CD8-positive, alpha-beta T cell (primary cell): ENCODE measurements at regions of chr17 and their contacts with region 1.

Region 1: GRCh38 chr17:49707608-49708514 is at the start of gene SLC35B1:
- DNase-seq: peak; percentile 96 to 100 (median 98)
- ATAC-seq: peak; percentile 97
- H3K4me3 ChIP-seq: peak within 1 kb of the TSS; percentile 87 to 93
- H3K4me3 Mint-ChIP-seq: peak within 1 kb of the TSS; percentile 93
- H3K27ac ChIP-seq: peak within 1 kb of the TSS; percentile 95 to 97
- H3K27ac Mint-ChIP-seq: peak within 1 kb of the TSS; percentile 98
- H3K4me1 ChIP-seq: peaks cover 21% of the 10 kb centered on the region
- H3K4me1 Mint-ChIP-seq: peaks cover 42% of the 10 kb centered on the region
- H3K27me3 ChIP-seq: no peaks in the 10 kb centered on the region
- H3K27me3 Mint-ChIP-seq: no peaks in the 10 kb centered on the region
- CTCF ChIP-seq: peak; percentile 80
- total RNA-seq, gene SLC35B1: 57.7 to 64.2 TPM

Region 2: DNA sequence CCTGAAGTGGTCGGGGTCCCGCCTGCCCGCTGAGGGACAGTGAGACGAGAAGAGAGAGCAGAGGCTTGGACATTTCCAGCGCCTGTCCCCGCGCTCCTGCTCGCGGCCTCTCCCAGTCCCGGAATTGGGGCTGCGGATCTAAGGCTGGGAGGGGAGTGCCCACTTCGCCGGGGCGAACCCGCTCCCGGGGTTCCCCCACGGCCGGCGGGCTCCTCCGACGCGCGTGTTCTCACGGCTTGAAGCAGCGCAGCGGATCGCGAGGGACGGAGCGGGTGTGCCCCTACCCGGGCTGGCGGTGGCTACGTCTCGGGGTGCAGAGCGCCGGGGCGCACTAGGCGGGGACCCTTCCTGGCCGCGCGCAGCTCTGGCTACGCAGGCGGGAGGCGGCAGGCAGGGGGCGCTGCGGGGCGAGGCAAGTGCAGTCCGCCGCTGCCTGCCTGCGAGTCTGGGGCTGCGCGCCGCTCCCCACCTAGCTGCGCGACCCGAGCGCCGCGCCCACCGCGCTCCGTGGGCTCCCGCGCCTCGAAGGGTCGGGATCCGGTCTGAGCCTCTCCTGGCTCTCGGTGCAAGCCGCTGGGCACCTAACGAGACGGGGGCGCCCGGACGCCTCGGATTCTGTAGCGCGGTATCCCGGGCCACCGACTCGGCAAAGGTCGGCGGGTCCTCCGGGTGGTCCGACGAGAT is 211.5 kb before region 1 on chr17:
- CTCF ChIA-PET with region 1: no interaction called
- POLR2A ChIA-PET with region 1: no interaction called
- intact Hi-C with region 1: loop called in 1 of 2 experiments (anchors 10 kb)
- DNase-seq: peak; percentile 74 to 91 (median 85)
- ATAC-seq: peak; percentile 83
- H3K4me3 ChIP-seq: peak overlapping the region; percentile 53 to 67
- H3K4me3 Mint-ChIP-seq: peak overlapping the region; percentile 79
- H3K27ac ChIP-seq: no peak overlapping the region
- H3K27ac Mint-ChIP-seq: no peak overlapping the region
- H3K4me1 ChIP-seq: peaks cover 33% of the 10 kb centered on the region
- H3K4me1 Mint-ChIP-seq: peaks cover 28% of the 10 kb centered on the region
- H3K27me3 ChIP-seq: peaks cover 28 to 29% of the 10 kb centered on the region in 2 experiments
- H3K27me3 Mint-ChIP-seq: peaks cover 36% of the 10 kb centered on the region
- CTCF ChIP-seq: peak; percentile 89

Region 3: DNA sequence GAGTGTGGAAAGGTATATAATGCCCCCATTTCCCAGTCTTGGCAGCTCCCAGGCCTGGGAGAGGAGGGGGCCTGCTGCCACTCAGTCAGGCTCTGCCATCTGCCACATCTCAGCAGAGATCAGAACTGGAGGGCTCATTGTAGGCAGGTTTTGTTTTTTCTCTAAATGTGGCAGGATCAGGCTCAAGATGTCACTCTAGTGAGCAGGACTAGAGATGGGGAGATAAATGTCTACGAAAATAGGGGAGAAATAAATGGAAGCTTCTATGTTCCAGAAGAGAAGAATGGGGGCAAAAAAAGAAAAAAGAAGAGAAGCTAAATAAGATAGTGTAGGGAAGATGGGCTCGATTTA is 118.3 kb before region 1 on chr17:
- CTCF ChIA-PET with region 1: no interaction called
- POLR2A ChIA-PET with region 1: no interaction called
- intact Hi-C with region 1: no loop called
- DNase-seq: no peak
- ATAC-seq: no peak
- H3K4me3 ChIP-seq: no peak overlapping the region
- H3K4me3 Mint-ChIP-seq: no peak overlapping the region
- H3K27ac ChIP-seq: no peak overlapping the region
- H3K27ac Mint-ChIP-seq: peak overlapping the region; percentile 13
- H3K4me1 ChIP-seq: no peaks in the 10 kb centered on the region
- H3K4me1 Mint-ChIP-seq: peaks cover 5% of the 10 kb centered on the region
- H3K27me3 ChIP-seq: no peaks in the 10 kb centered on the region
- H3K27me3 Mint-ChIP-seq: no peaks in the 10 kb centered on the region
- CTCF ChIP-seq: no peak

Region 4: GRCh38 chr17:49677933-49678847 is 29.7 kb before region 1 on chr17 and contains the start of gene SPOP:
- CTCF ChIA-PET with region 1: interaction called, 7 read pairs
- POLR2A ChIA-PET with region 1: interaction called, 12 read pairs
- intact Hi-C with region 1: loop called in 1 of 2 experiments (anchors 1 kb)
- DNase-seq: peak; percentile 97 to 100 (median 99)
- ATAC-seq: peak; percentile 94
- H3K4me3 ChIP-seq: peak within 1 kb of the TSS; percentile 76 to 81
- H3K4me3 Mint-ChIP-seq: peak within 1 kb of the TSS; percentile 97
- H3K27ac ChIP-seq: peak within 1 kb of the TSS; percentile 91 to 98
- H3K27ac Mint-ChIP-seq: peak within 1 kb of the TSS; percentile 100
- H3K4me1 ChIP-seq: peaks cover 29% of the 10 kb centered on the region
- H3K4me1 Mint-ChIP-seq: peaks cover 49% of the 10 kb centered on the region
- H3K27me3 ChIP-seq: no peaks in the 10 kb centered on the region
- H3K27me3 Mint-ChIP-seq: no peaks in the 10 kb centered on the region
- CTCF ChIP-seq: no peak
- total RNA-seq, gene SPOP: 30.5 to 34.3 TPM

Region 5: GRCh38 chr17:49739641-49740271 is 31.9 kb after region 1 on chr17:
- CTCF ChIA-PET with region 1: interaction called, 22 read pairs
- POLR2A ChIA-PET with region 1: interaction called, 30 read pairs
- intact Hi-C with region 1: loop called (anchors 1 kb)
- DNase-seq: peak; percentile 91 to 99 (median 98)
- ATAC-seq: peak; percentile 95
- H3K4me3 ChIP-seq: peak overlapping the region; percentile 42 to 54
- H3K4me3 Mint-ChIP-seq: peak overlapping the region; percentile 90
- H3K27ac ChIP-seq: peak overlapping the region; percentile 77 to 96
- H3K27ac Mint-ChIP-seq: peak overlapping the region; percentile 100
- H3K4me1 ChIP-seq: peaks cover 83% of the 10 kb centered on the region
- H3K4me1 Mint-ChIP-seq: peaks cover 87% of the 10 kb centered on the region
- H3K27me3 ChIP-seq: no peaks in the 10 kb centered on the region
- H3K27me3 Mint-ChIP-seq: no peaks in the 10 kb centered on the region
- CTCF ChIP-seq: no peak

Region 6: GRCh38 chr17:49763735-49764558 is 56.1 kb after region 1 on chr17 and contains the start of gene FAM117A:
- CTCF ChIA-PET with region 1: interaction called, 22 read pairs
- POLR2A ChIA-PET with region 1: interaction called, 59 read pairs
- intact Hi-C with region 1: loop called (anchors 1 kb)
- DNase-seq: peak; percentile 90 to 99 (median 95)
- ATAC-seq: peak; percentile 84
- H3K4me3 ChIP-seq: peak within 1 kb of the TSS; percentile 67 to 68
- H3K4me3 Mint-ChIP-seq: peak within 1 kb of the TSS; percentile 93
- H3K27ac ChIP-seq: peak within 1 kb of the TSS; percentile 46 to 69
- H3K27ac Mint-ChIP-seq: peak within 1 kb of the TSS; percentile 91
- H3K4me1 ChIP-seq: peaks cover 43% of the 10 kb centered on the region
- H3K4me1 Mint-ChIP-seq: peaks cover 48% of the 10 kb centered on the region
- H3K27me3 ChIP-seq: no peaks in the 10 kb centered on the region
- H3K27me3 Mint-ChIP-seq: no peaks in the 10 kb centered on the region
- CTCF ChIP-seq: no peak
- total RNA-seq, gene FAM117A: 23.4 to 28.7 TPM

Region 7: GRCh38 chr17:49788478-49789242 is 80.8 kb after region 1 on chr17 and contains the start of gene KAT7:
- CTCF ChIA-PET with region 1: interaction called, 11 read pairs
- POLR2A ChIA-PET with region 1: interaction called, 36 read pairs
- intact Hi-C with region 1: loop called (anchors 1 kb)
- DNase-seq: peak; percentile 94 to 100 (median 98)
- ATAC-seq: peak; percentile 82
- H3K4me3 ChIP-seq: peak within 1 kb of the TSS; percentile 84 to 98
- H3K4me3 Mint-ChIP-seq: peak within 1 kb of the TSS; percentile 99
- H3K27ac ChIP-seq: peak within 1 kb of the TSS; percentile 96 to 99
- H3K27ac Mint-ChIP-seq: peak within 1 kb of the TSS; percentile 100
- H3K4me1 ChIP-seq: peaks cover 45% of the 10 kb centered on the region
- H3K4me1 Mint-ChIP-seq: peaks cover 54% of the 10 kb centered on the region
- H3K27me3 ChIP-seq: no peaks in the 10 kb centered on the region
- H3K27me3 Mint-ChIP-seq: no peaks in the 10 kb centered on the region
- CTCF ChIP-seq: no peak
- total RNA-seq, gene KAT7: 170 to 189 TPM

Region 8: DNA sequence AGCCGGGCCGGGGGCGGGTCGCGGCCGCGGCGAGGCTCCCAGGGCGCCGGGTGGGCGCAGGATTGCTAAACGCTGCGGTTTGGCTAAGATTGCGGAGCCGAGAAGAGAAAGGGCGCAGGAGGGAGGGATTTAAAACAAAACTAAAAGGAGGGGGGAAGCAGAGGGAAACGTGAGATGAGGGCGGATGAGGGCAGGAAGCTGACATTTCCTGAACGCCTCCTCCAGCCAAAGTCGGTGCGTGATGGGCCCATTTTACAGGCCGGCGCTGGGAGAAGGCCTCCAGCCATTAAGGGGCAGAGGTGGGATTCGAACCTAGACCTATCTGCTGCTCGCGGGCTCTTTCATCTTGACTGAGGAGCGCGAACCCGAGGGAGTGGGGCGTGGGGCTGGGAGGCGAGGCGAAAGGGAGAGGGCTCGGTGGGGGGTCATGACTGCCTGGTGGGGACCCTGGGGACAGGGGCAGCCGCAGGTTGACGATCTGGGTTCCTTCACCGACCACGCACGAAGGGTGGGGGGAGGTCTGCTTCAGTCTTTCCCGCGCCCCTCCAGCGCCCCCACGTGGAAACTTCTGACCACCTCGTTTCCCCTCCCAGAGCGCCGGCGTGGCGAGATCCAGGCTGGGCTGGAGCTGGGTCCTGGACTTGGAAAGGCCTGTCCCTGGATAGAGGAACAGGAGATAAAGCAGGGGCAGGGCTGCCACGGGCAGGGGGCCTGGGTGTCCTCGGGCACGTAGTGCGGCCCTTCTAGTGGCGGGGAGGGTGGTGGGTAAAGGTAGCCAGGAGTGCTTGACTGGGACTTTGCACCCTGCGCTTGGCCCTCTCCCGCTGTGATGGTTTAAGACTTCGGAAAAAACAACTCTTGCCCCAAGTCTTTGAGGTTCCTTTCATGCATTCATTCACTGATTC is 143.8 kb after region 1 on chr17:
- CTCF ChIA-PET with region 1: interaction called, 7 read pairs
- POLR2A ChIA-PET with region 1: no interaction called
- intact Hi-C with region 1: loop called (anchors 2 to 5 kb)
- DNase-seq: peak; percentile 47 to 87 (median 76)
- ATAC-seq: peak; percentile 77
- H3K4me3 ChIP-seq: peak overlapping the region; percentile 73 to 83
- H3K4me3 Mint-ChIP-seq: peak overlapping the region; percentile 92
- H3K27ac ChIP-seq: peak overlapping the region; percentile 59 to 66
- H3K27ac Mint-ChIP-seq: peak overlapping the region; percentile 89
- H3K4me1 ChIP-seq: peaks cover 17% of the 10 kb centered on the region
- H3K4me1 Mint-ChIP-seq: peaks cover 15% of the 10 kb centered on the region
- H3K27me3 ChIP-seq: no peaks in the 10 kb centered on the region
- H3K27me3 Mint-ChIP-seq: no peaks in the 10 kb centered on the region
- CTCF ChIP-seq: peak; percentile 72